ENCODE measurements at regions of chr6 and their contacts with region 1.

Region 1: DNA sequence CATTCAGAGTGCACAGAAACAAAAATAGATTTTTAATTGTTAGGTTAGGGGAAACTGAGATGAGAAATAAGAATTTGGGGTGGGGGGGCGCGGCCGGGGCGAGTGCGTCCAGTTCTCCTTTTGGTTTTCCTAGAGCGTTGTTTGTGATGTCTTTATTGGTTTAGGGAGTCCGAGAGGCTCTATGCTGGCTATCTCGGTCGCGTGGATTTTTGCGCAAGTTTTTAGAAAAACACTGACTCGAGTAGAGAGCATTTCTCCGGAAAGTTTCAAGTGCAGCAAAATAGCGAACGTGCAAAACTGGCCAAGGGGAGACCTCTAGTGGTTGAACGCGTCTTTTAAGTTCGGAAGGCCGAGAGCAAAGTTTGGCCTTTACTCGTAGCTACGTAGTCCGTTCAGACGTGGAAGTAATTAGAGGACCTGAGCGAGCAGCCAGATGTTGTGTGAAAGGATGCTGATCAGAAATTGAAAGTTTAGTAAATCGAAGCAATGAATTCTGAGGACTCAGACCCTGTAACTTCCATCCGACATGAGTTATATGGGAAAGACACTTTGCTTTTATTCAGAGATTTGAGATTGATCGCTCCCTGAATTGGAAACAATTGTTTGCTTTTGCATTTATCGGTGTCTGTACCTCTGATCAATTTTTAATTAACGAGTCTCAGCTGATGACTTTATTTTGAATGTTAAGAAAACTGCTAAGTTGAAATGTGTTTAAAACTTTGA is 2.7 kb downstream of the L3MBTL3 start:
- DNase-seq: peak; percentile 85
- H3K4me3 Mint-ChIP-seq: peak overlapping the region; percentile 95
- H3K27ac Mint-ChIP-seq: peak overlapping the region; percentile 97
- H3K4me1 Mint-ChIP-seq: peaks cover 21% of the 10 kb centered on the region
- H3K27me3 Mint-ChIP-seq: peaks cover 2% of the 10 kb centered on the region

Region 2: DNA sequence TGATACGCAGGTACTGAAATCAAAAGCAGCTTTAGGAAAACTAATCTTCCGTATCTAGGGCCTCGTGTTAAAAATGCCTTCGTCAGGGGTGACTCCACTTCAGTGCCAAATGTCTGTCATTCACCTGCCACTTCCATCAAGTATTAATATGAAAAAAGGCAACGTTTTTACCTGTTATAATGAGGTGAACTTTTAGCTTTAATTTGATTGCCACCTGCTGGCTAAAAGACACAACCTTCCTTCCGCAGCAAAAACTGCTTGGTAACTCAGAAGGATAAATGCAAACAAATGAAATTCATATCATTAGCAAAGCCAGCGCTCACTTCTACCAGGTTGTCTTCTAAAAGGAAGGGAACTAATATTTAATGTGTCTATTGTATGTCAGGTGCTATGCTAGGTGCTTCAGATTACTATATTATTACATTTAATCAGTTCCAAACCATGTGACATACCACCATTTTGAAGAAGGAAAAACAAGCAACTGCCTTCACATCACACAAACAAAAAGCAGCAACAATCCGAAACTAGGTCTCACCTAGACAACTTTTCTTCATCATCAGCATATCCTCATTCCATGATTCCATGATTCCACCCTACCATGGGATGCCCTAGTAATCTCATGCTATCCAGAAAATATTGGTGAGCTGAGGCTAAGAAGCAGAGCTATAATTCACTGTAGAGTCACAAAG is 290.4 kb before region 1 on chr6:
- CTCF ChIA-PET with region 1: interaction called, 14 read pairs
- POLR2A ChIA-PET with region 1: interaction called, 3 read pairs
- DNase-seq: peak; percentile 30
- H3K4me3 Mint-ChIP-seq: no peak overlapping the region
- H3K27ac Mint-ChIP-seq: no peak overlapping the region
- H3K4me1 Mint-ChIP-seq: peaks cover 16% of the 10 kb centered on the region
- H3K27me3 Mint-ChIP-seq: no peaks in the 10 kb centered on the region

Region 3: DNA sequence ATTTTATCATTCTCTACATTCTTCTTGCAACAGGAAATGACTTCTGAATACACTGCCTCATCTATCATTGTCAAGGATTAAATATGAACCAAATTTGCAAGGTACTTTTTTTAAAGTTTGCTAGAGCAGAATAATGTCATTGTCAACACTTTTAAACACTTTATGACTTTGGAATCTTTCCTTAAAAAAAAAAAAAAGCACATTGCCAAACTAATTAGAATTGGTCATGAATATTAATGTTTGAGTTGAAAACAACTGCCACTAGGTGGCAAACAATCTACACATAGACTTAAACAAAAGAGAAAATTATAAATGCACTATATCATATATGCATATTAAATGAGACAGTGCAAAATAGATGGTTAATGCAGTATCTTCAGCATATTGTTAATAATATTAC is 127.4 kb before region 1 on chr6:
- CTCF ChIA-PET with region 1: interaction called, 19 read pairs
- POLR2A ChIA-PET with region 1: no interaction called
- DNase-seq: no peak
- H3K4me3 Mint-ChIP-seq: no peak overlapping the region
- H3K27ac Mint-ChIP-seq: no peak overlapping the region
- H3K4me1 Mint-ChIP-seq: peaks cover 7% of the 10 kb centered on the region
- H3K27me3 Mint-ChIP-seq: peaks cover 1% of the 10 kb centered on the region

Region 4: GRCh38 chr6:130000526-130001421 is 20.3 kb before region 1 on chr6:
- CTCF ChIA-PET with region 1: no interaction called
- POLR2A ChIA-PET with region 1: no interaction called
- DNase-seq: no peak
- H3K4me3 Mint-ChIP-seq: no peak overlapping the region
- H3K27ac Mint-ChIP-seq: no peak overlapping the region
- H3K4me1 Mint-ChIP-seq: peaks cover 1% of the 10 kb centered on the region
- H3K27me3 Mint-ChIP-seq: peaks cover 16% of the 10 kb centered on the region

Region 5: DNA sequence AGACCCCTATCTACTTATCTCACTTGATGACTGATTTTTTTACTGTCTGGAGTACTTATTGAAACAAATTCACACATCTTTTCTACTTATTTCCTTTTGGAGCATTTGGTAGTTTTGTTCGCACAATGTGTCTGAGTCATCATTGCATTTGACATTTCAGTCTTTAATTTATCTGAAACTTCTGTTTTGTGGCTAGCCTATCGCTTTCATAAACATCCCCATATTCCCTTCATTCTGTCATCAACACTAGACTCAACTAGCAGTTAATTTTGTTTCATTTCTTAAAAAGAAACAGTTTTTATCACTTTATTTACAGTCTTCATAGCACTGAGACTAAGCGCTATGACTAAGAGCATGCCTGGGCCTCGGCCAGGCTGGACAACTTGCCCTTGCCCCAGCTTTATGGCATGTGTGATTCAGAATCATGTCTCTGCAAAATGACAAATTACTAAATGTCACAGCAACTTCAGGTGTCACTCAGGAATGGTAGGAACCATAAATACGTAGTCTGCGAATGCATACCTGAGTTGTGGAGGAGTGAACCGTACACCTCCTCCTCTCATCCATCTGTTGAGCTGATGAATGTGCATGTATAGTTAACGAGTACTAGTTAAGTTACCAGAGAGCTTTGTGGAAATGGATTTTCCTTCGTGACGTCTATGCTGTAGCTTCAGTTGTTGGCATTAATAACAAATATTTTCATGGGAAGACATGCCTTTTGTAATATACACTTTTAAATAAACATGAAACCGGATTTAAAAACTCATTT is 13.5 kb after region 1 on chr6:
- CTCF ChIA-PET with region 1: interaction called, 22 read pairs
- POLR2A ChIA-PET with region 1: interaction called, 15 read pairs
- DNase-seq: no peak
- H3K4me3 Mint-ChIP-seq: no peak overlapping the region
- H3K27ac Mint-ChIP-seq: peak overlapping the region; percentile 55
- H3K4me1 Mint-ChIP-seq: peaks cover 49% of the 10 kb centered on the region
- H3K27me3 Mint-ChIP-seq: no peaks in the 10 kb centered on the region

Region 6: GRCh38 chr6:130190701-130191690 is 169.9 kb after region 1 on chr6:
- CTCF ChIA-PET with region 1: no interaction called
- POLR2A ChIA-PET with region 1: no interaction called
- DNase-seq: no peak
- H3K4me3 Mint-ChIP-seq: no peak overlapping the region
- H3K27ac Mint-ChIP-seq: no peak overlapping the region
- H3K4me1 Mint-ChIP-seq: peaks cover 28% of the 10 kb centered on the region
- H3K27me3 Mint-ChIP-seq: no peaks in the 10 kb centered on the region

Region 7: GRCh38 chr6:130223508-130223907 is 202.4 kb after region 1 on chr6:
- CTCF ChIA-PET with region 1: interaction called, 12 read pairs
- POLR2A ChIA-PET with region 1: interaction called, 5 read pairs
- DNase-seq: peak; percentile 86
- H3K4me3 Mint-ChIP-seq: peak overlapping the region; percentile 26
- H3K27ac Mint-ChIP-seq: peak overlapping the region; percentile 98
- H3K4me1 Mint-ChIP-seq: peaks cover 39% of the 10 kb centered on the region
- H3K27me3 Mint-ChIP-seq: no peaks in the 10 kb centered on the region

Measured in activated CD4-positive, alpha-beta memory T cell treated with anti-CD3 and anti-CD28 coated beads, Interleukin-2, amount 10 ng/mL, durations not matched to agents 7 days and 5 days (primary cell).